ENCODE measurements at regions of chr7 and their contacts with region 1.

Region 1: GRCh38 chr7:11847336-11847735 is 15.3 kb upstream of the THSD7A start:
- DNase-seq: no peak
- ATAC-seq: no peak
- H3K4me3 ChIP-seq: no peak overlapping the region
- H3K27ac ChIP-seq: no peak overlapping the region
- H3K4me1 ChIP-seq: no peaks in the 10 kb centered on the region
- H3K27me3 ChIP-seq: no peaks in the 10 kb centered on the region
- CTCF ChIP-seq: no peak
- POLR2A ChIP-seq: no peak
- RAD21 ChIP-seq: no peak

Region 2: GRCh38 chr7:12102126-12102525 is 254.8 kb after region 1 on chr7:
- CTCF ChIA-PET with region 1: no interaction called
- POLR2A ChIA-PET with region 1: no interaction called
- RAD21 ChIA-PET with region 1: no interaction called
- intact Hi-C with region 1: no loop called
- DNase-seq: no peak
- ATAC-seq: no peak
- H3K4me3 ChIP-seq: no peak overlapping the region
- H3K27ac ChIP-seq: no peak overlapping the region
- H3K4me1 ChIP-seq: no peaks in the 10 kb centered on the region
- H3K27me3 ChIP-seq: no peaks in the 10 kb centered on the region
- CTCF ChIP-seq: no peak
- POLR2A ChIP-seq: no peak
- RAD21 ChIP-seq: no peak

Region 3: GRCh38 chr7:12328888-12329770 is 481.8 kb after region 1 on chr7:
- CTCF ChIA-PET with region 1: no interaction called
- POLR2A ChIA-PET with region 1: no interaction called
- RAD21 ChIA-PET with region 1: no interaction called
- intact Hi-C with region 1: loop called (anchors 5 kb)
- DNase-seq: no peak
- ATAC-seq: no peak
- H3K4me3 ChIP-seq: no peak overlapping the region
- H3K27ac ChIP-seq: no peak overlapping the region
- H3K4me1 ChIP-seq: no peaks in the 10 kb centered on the region
- H3K27me3 ChIP-seq: no peaks in the 10 kb centered on the region
- CTCF ChIP-seq: no peak
- POLR2A ChIP-seq: no peak
- RAD21 ChIP-seq: no peak

Measured in HCT116 (cell line).